Activated T-helper 1 cell treated with anti-CD3 and anti-CD28 coated beads, Interleukin-12 subunit alpha, Interleukin-12 subunit beta, Interleukin-2, Interleukin-4 antibody, amounts not matched to agents 30 ng/mL and 10 ng/mL and 1 ng/mL, durations not matched to agents 14 hours and 24 hours and 36 hours (primary cell): ENCODE measurements at regions of chrX and their contacts with region 1.

Region 1: GRCh38 chrX:97211070-97211469 is 327.4 kb downstream of the RPA4 start:
- DNase-seq: no peak
- H3K4me3 Mint-ChIP-seq: no peak overlapping the region
- H3K27ac Mint-ChIP-seq: no peak overlapping the region
- H3K4me1 Mint-ChIP-seq: no peaks in the 10 kb centered on the region
- H3K27me3 Mint-ChIP-seq: no peaks in the 10 kb centered on the region

Region 2: DNA sequence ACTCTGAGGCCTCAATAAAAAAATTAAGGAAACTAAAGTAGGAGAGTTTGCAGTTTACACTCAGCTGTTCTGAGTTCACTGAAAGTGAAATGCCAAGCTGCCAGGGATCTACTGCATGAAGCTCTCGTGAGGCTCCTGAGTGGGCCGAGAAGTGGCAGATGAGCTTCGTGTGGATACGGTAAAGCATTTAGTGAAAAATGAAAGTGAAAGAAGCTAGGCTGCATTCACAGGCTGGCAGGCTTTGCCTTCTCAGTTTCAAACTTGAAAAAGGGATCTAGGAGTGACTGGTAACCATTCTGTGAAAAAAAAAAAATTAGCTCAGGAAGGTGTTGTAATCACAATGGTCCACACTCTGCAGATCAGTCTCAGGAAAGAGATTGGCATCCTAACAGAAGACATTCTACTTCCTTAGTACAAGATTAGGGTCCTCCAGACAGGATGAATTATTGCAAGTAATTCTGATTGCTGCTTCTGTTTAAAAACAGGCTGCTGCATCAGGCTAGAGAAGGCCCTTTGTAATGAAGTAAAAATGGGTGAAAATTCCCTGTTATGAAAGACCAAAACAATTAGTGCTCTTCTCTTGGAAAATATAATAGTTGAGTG is 352.6 kb after region 1 on chrX:
- intact Hi-C with region 1: loop called (anchors 2 kb)
- DNase-seq: peak; percentile 28
- H3K4me3 Mint-ChIP-seq: peak overlapping the region; percentile 55
- H3K27ac Mint-ChIP-seq: peak overlapping the region; percentile 62
- H3K4me1 Mint-ChIP-seq: peaks cover 8% of the 10 kb centered on the region
- H3K27me3 Mint-ChIP-seq: no peaks in the 10 kb centered on the region